Endothelial cell of umbilical vein (primary cell): ENCODE measurements at regions of chr5 and their contacts with region 1.

Region 1: GRCh38 chr5:179668391-179668790 is 12.4 kb downstream of the CBY3 start:
- DNase-seq: peak; percentile 59
- H3K4me3 ChIP-seq: no peak overlapping the region
- H3K27ac ChIP-seq: no peak overlapping the region
- H3K4me1 ChIP-seq: no peaks in the 10 kb centered on the region
- H3K27me3 ChIP-seq: no peaks in the 10 kb centered on the region
- CTCF ChIP-seq: peak; percentile 88 to 89
- POLR2A ChIP-seq: no peak

Region 2: DNA sequence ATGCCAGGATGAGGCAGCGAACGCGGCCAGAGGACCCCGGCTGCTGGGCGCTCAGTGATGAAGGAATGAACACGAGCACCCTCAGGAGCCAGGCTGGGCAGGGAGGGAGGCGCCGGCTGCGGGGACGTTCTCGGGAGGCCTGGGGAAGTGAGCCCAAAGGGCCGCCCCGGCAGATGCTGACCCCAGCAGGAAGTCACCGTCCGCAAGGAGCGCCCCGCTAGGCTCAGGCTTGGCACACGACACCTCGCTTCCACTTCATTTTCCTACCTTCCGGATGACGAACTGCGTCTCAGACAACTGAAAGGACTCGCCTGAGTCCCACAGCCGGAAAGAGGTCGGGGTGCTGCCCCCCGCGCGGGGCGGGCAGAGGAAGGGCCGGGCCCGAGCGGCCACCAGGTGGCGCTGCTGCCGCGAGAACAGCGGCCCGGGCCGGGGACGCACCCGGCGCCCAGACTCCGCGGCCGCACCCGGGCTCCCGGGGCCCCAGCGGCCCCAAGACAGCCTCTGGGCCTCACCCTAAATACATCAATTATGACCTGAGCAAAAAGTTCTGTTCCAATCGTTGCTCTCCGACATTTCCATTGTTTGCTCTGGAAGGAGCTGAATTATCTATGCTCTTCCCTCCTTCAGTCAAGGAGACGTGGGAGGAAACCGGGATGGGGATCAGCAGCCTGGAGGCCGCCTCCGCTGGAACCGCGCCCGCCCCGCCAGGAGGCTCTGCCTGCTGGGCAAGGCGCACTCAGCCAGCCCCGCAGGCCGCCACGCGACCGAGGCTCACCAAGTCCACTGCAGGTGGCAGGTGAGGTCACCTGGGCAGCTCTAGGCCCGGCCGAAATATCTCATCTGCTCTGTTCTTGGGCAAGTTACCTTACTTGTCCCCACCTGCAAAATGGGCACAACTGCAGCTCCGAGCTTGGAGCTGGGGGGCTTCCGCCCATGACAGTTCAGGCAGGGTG is 501.2 kb before region 1 on chr5:
- CTCF ChIA-PET with region 1: no interaction called
- POLR2A ChIA-PET with region 1: no interaction called
- dilution Hi-C with region 1: no loop called
- intact Hi-C with region 1: loop called (anchors 5 kb)
- DNase-seq: no peak
- H3K4me3 ChIP-seq: no peak overlapping the region
- H3K27ac ChIP-seq: no peak overlapping the region
- H3K4me1 ChIP-seq: no peaks in the 10 kb centered on the region
- H3K27me3 ChIP-seq: no peaks in the 10 kb centered on the region
- CTCF ChIP-seq: peak; percentile 53 to 69
- POLR2A ChIP-seq: no peak

Region 3: GRCh38 chr5:179678223-179679013 is 10.0 kb after region 1 on chr5:
- CTCF ChIA-PET with region 1: interaction called, 16 read pairs
- POLR2A ChIA-PET with region 1: no interaction called
- dilution Hi-C with region 1: no loop called
- intact Hi-C with region 1: no loop called
- DNase-seq: peak; percentile 96
- H3K4me3 ChIP-seq: peak overlapping the region; percentile 62 to 64 (median 63)
- H3K27ac ChIP-seq: peak overlapping the region; percentile 35
- H3K4me1 ChIP-seq: no peaks in the 10 kb centered on the region
- H3K27me3 ChIP-seq: no peaks in the 10 kb centered on the region
- CTCF ChIP-seq: no peak
- POLR2A ChIP-seq: peak; percentile 98

Region 4: DNA sequence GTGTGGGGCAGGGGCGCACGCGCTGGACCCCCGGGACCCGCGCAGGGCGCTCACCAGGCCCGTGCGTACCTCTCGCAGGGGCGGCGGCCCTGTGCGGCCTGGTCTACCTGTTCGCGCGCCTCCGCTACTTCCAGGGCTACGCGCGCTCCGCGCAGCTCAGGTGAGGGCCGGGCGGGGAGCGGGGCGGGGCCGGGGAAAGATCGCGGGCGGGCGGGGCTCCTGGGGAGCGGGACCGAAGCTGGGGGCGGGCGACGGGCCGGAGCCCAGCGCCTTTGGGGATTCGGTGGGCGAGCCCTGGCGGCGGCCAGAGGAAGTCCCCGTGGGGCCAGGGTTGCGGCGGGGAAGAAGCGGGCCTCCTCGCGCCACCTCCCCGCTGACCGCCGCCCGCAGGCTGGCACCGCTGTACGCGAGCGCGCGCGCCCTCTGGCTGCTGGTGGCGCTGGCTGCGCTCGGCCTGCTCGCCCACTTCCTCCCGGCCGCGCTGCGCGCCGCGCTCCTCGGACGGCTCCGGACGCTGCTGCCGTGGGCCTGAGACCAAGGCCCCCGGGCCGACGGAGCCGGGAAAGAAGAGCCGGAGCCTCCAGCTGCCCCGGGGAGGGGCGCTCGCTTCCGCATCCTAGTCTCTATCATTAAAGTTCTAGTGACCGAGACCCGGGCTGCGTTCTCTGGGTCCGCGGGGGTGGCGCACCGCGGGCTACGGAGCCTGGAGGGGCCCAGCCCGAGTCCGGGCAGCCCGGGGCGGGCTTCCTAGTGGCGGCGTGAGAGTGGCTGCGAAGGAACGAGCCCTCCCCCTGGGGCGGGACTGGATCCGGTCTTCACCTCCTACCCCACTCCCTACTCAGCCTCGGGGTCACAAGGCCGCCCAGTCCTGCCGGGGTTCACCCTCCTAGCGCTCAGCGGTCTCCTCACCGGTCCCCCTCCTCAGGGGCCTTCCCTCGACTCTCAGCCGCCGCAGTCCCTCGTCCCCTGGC is 127.8 kb after region 1 on chr5:
- CTCF ChIA-PET with region 1: no interaction called
- POLR2A ChIA-PET with region 1: no interaction called
- dilution Hi-C with region 1: no loop called
- intact Hi-C with region 1: loop called (anchors 10 kb)
- DNase-seq: peak; percentile 78
- H3K4me3 ChIP-seq: peak overlapping the region; percentile 14 to 57 (median 38)
- H3K27ac ChIP-seq: no peak overlapping the region
- H3K4me1 ChIP-seq: peaks cover 10% of the 10 kb centered on the region
- H3K27me3 ChIP-seq: no peaks in the 10 kb centered on the region
- CTCF ChIP-seq: peak; percentile 70 to 83
- POLR2A ChIP-seq: peak; percentile 61